Prostate gland (tissue), 2 donors: ENCODE measurements at regions of chr14 and their contacts with region 1.

Region 1: DNA sequence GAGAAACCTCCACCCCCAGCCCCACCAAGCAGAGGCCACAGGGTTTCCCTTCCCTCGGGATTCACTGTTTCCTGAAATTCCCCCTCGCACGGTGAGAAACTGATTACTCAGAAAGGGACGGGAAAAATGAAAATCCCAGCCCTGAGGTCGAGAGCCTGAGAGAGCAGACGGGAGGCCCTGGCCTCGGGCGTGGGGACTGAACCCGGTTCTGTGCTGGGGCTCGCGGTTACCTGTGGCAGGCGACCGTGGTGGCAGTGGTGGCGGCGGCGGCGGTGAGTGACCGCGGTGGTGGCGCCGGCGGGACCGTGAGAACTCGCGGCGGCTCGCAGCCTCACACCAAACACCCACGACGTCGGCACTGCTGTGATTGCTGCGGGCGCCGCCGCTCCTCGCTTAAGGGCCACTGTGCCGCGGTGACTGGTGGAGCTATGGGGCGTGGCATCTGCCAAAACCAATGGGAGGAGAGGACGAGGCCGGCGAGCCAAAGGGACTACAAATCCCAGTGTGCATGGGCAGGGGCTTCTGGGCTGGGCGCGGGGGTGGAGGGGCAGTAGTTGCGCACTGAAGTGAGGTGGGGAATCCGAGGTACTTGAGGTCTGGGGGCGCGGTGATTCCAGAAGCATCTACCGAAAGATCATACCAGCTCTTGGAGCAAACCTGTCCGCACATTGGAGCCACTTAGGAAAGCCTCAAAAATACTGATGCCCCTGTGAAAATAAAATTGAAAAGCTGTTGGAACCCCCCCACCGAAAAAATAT is at the start of gene LGMN:
- DNase-seq: peak; percentile 97
- H3K4me3 ChIP-seq: peak within 1 kb of the TSS; percentile 59 to 78
- H3K27ac ChIP-seq: peak within 1 kb of the TSS; percentile 78 to 85
- H3K4me1 ChIP-seq: no peaks in the 10 kb centered on the region
- H3K27me3 ChIP-seq: no peaks in the 10 kb centered on the region
- CTCF ChIP-seq: peak in 2 of 4 experiments; percentile 15 to 16
- POLR2A ChIP-seq: peak; percentile 99
- total RNA-seq, gene LGMN: 88.3 to 155 TPM

Region 2: DNA sequence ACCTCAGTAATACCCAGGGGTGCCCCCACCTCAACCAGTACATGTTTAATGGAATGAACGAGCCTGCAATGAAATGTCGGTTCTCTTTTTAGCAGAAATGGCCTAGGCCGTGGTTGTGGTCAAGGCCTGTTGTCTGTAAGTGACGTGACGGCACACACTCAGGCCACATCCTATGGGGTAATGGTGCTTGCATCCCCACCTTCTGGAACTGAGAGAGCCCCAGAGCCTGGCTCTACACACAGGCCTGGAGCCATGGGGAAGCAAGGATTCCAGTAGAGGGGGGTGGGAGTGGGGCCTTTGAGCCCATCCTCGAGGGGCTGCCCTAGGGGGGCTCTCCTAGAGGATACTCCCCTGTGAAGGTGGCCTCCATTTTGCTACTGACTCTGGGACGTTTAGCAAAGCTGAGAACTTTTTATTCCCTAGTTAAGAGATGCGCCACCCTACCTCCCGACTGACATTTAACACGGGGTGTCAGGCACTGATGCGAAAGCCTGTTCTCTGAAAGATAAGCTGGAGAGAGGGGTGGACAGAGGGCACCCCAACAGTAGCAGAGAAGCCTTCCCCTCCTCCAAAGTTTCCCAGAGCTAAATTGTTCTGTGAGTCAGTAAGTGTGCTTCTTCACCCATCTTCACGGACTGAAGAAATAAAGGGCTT is 228.2 kb before region 1 on chr14:
- intact Hi-C with region 1: no loop called
- DNase-seq: no peak
- H3K4me3 ChIP-seq: no peak overlapping the region
- H3K27ac ChIP-seq: no peak overlapping the region
- H3K4me1 ChIP-seq: no peaks in the 10 kb centered on the region
- H3K27me3 ChIP-seq: no peaks in the 10 kb centered on the region
- CTCF ChIP-seq: no peak
- POLR2A ChIP-seq: no peak

Region 3: GRCh38 chr14:92793709-92794546 is 45.5 kb after region 1 on chr14 and contains the start of gene GOLGA5:
- intact Hi-C with region 1: loop called (anchors 5 kb)
- DNase-seq: peak; percentile 98
- H3K4me3 ChIP-seq: peak within 1 kb of the TSS; percentile 64 to 87
- H3K27ac ChIP-seq: peak within 1 kb of the TSS; percentile 82 to 90
- H3K4me1 ChIP-seq: no peaks in the 10 kb centered on the region
- H3K27me3 ChIP-seq: no peaks in the 10 kb centered on the region
- CTCF ChIP-seq: peak in 3 of 4 experiments; percentile 27 to 73 (median 58)
- POLR2A ChIP-seq: peak; percentile 84
- total RNA-seq, gene GOLGA5: 63.5 to 69.5 TPM